ENCODE measurements at regions of chr2 and their contacts with region 1.

Region 1: DNA sequence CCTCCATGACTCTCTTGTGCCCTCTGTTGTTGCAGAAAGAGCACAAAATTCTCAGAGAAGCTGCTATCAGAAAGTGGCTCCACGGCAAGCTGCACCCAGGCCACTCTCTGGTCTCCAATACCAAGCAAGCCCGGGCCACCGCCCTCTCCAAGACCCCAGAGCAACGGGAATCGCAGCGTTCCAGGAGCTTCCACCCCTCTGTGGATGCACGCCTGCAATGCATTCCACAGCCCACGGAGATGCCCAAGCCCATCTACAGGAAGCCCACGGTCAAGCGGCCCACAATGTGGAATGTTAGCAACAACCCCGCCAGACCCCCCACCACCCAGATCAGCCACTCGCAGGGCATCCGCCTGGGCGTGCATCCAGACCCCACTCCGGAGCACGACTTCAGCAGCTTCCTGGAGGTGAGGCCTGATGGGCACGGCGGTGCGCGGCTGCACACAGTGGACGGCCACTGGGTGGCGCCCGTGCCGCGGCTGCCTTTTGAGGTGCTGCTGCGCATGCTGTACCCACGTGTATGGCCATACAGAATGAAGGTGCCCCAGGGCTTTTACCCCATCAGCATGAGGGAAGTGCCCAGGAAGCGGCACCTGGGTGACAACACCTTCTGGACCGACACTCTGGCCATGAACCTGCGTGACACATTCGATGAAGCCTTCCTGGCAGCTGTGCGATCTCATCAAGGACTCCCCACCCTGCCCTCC is 6.3 kb downstream of the ANKRD53 start:
- DNase-seq: peak; percentile 81 to 89
- ATAC-seq: peak; percentile 99 to 100 (median 100)
- H3K4me3 ChIP-seq: no peak overlapping the region
- H3K4me3 Mint-ChIP-seq: peak overlapping the region; percentile 60
- H3K27ac ChIP-seq: no peak overlapping the region
- H3K27ac Mint-ChIP-seq: peak overlapping the region in 1 of 2 donors; percentile 75
- H3K4me1 ChIP-seq: peaks cover 10% of the 10 kb centered on the region
- H3K4me1 Mint-ChIP-seq: peaks cover 6 to 10% of the 10 kb centered on the region in 2 donors
- H3K27me3 ChIP-seq: no peaks in the 10 kb centered on the region
- H3K27me3 Mint-ChIP-seq: no peaks in the 10 kb centered on the region
- CTCF ChIP-seq: peak; percentile 92

Region 2: GRCh38 chr2:70994756-70995729 is 10.3 kb after region 1 on chr2 and contains the start of gene TEX261:
- intact Hi-C with region 1: loop called (anchors 1 kb)
- DNase-seq: peak; percentile 90 to 92
- ATAC-seq: peak; percentile 96 to 99 (median 98)
- H3K4me3 ChIP-seq: peak within 1 kb of the TSS; percentile 90
- H3K4me3 Mint-ChIP-seq: peak within 1 kb of the TSS; percentile 91
- H3K27ac ChIP-seq: peak within 1 kb of the TSS; percentile 71
- H3K27ac Mint-ChIP-seq: peak within 1 kb of the TSS; percentile 86 to 92
- H3K4me1 ChIP-seq: peaks cover 27% of the 10 kb centered on the region
- H3K4me1 Mint-ChIP-seq: peaks cover 33 to 35% of the 10 kb centered on the region in 2 donors
- H3K27me3 ChIP-seq: no peaks in the 10 kb centered on the region
- H3K27me3 Mint-ChIP-seq: no peaks in the 10 kb centered on the region
- CTCF ChIP-seq: peak; percentile 54
- total RNA-seq, gene TEX261: 30.3 to 44.2 (median 43.2) TPM

Measured in natural killer cell (primary cell).